Sigmoid colon (tissue), 7 donors: ENCODE measurements at regions of chr9 and their contacts with region 1.

Region 1: GRCh38 chr9:83707768-83708514 is at the start of gene UBQLN1:
- DNase-seq: peak; percentile 98
- H3K4me3 ChIP-seq: peak within 1 kb of the TSS; percentile 83 to 97 (median 86)
- H3K27ac ChIP-seq: peak within 1 kb of the TSS; percentile 94 to 100 (median 98)
- H3K4me1 ChIP-seq: peaks cover 0 to 28% (median 19%) of the 10 kb centered on the region in 4 donors
- H3K27me3 ChIP-seq: no peaks in the 10 kb centered on the region
- CTCF ChIP-seq: peak in 1 of 4 experiments; percentile 10
- EP300 ChIP-seq: no peak
- POLR2A ChIP-seq: peak; percentile 89 to 90
- total RNA-seq, gene UBQLN1: 96.1 to 113 (median 105) TPM

Region 2: GRCh38 chr9:83622939-83623678 is 84.8 kb before region 1 on chr9 and contains the start of gene IDNK:
- intact Hi-C with region 1: loop called (anchors 2 kb)
- DNase-seq: peak; percentile 78
- H3K4me3 ChIP-seq: peak within 1 kb of the TSS; percentile 69 to 86 (median 75)
- H3K27ac ChIP-seq: peak within 1 kb of the TSS; percentile 86 to 90 (median 88)
- H3K4me1 ChIP-seq: peaks cover 0 to 17% (median 6%) of the 10 kb centered on the region in 4 donors
- H3K27me3 ChIP-seq: no peaks in the 10 kb centered on the region
- CTCF ChIP-seq: no peak
- EP300 ChIP-seq: no peak
- POLR2A ChIP-seq: no peak
- total RNA-seq, gene IDNK: 3.3 to 11.8 (median 5.9) TPM

Region 3: DNA sequence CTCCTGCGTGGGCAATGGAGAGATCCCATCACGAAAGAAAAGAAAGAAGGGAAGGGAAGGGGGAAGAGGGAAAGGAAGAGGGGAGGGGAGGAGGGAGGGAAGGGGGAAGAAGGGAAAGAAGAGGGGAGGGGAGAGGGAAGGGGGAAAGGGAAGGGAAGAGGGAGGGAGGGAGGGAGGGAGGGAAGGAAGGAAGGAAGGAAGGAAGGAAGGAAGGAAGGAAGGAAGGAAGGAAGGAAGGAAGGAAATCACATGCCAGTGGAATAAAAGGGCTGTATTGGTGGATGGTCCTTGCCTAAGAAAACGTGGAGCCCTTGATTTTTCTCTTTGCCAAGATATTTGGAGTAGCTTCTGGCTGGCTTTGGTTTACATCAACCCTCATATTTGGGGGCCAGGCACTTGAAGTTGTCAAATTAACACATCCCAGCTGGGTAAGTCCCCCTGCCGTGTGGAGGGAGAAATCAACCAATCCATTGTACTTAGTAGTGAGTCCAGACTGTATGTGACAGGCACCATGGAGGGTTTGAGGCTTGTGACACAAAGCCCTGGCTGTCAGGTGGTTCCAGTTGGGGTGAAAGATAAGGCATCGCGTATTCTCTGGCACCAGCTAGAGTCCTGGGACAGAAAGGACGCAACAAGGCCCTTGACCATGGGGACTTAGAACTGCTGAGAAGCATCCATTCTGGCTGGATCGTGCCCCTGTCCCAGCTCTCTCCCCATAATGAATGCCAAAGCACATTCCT is 61.3 kb before region 1 on chr9:
- intact Hi-C with region 1: loop called (anchors 5 kb)
- DNase-seq: no peak
- H3K4me3 ChIP-seq: no peak overlapping the region
- H3K27ac ChIP-seq: no peak overlapping the region
- H3K4me1 ChIP-seq: no peaks in the 10 kb centered on the region
- H3K27me3 ChIP-seq: no peaks in the 10 kb centered on the region
- CTCF ChIP-seq: no peak
- EP300 ChIP-seq: no peak
- POLR2A ChIP-seq: no peak

Region 4: DNA sequence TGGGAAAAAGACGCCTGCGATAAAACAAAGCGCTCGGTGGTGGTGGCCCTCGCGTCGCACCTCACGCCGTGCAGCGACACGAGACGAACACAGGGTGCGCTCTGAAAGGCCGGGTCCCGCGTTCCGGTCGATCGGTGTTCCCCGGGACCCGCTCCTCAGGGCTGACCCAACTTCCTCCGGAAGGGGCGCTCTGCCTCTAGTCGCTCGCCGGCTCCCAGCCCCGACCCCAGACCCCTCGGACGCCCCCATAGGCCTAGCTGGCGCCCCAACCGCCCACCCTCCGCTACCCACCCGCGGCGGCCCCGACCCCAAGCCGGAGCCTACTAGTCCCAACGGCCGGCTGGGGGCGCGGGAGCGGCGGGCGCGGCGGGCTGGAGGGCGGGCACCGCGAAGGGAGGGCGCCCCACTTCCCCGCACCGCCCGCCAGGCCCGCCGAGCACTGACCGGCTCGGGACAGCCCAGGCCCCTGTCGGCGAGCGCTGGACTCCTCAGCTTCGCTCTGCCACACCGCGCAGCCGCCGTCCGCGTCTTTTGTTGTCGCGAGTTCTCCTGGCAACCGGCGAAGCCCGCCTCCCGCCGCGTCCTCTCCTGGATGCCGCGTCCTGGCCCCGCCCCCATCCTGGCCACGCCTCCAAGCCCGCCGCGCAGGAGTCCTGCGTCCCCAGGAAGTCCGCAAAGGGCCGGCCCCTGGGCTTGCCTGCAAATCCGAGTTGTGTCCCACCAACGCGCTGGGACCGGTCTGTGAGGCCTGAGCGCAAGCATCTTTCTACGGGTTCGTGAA is 213.2 kb after region 1 on chr9 and contains the start of gene KIF27:
- intact Hi-C with region 1: loop called (anchors 10 kb)
- DNase-seq: peak; percentile 99
- H3K4me3 ChIP-seq: peak within 1 kb of the TSS; percentile 67 to 92 (median 82)
- H3K27ac ChIP-seq: peak within 1 kb of the TSS; percentile 92 to 99 (median 97)
- H3K4me1 ChIP-seq: peaks cover 0 to 9% (median 8%) of the 10 kb centered on the region in 4 donors
- H3K27me3 ChIP-seq: no peaks in the 10 kb centered on the region
- CTCF ChIP-seq: peak in 2 of 4 experiments; percentile 9 to 46
- EP300 ChIP-seq: no peak
- POLR2A ChIP-seq: peak; percentile 39 to 63
- total RNA-seq, gene KIF27: 3.2 to 7.8 (median 5.2) TPM